ENCODE measurements at regions of chr14 and their contacts with region 1.

Region 1: GRCh38 chr14:90815822-90816700 is at the start of gene TTC7B:
- DNase-seq: peak; percentile 56 to 87 (median 83)
- ATAC-seq: peak; percentile 76 to 77
- H3K4me3 ChIP-seq: peak within 1 kb of the TSS; percentile 99
- H3K27ac ChIP-seq: no peak within 1 kb of the TSS
- H3K4me1 ChIP-seq: peaks cover 7% of the 10 kb centered on the region
- H3K27me3 ChIP-seq: no peaks in the 10 kb centered on the region
- total RNA-seq, gene TTC7B: 80.7 to 88.7 (median 85.5) TPM

Region 2: GRCh38 chr14:90758028-90758889 is 57.8 kb before region 1 on chr14:
- intact Hi-C with region 1: loop called in 1 of 4 experiments (anchors 10 kb)
- DNase-seq: peak; percentile 93 to 98 (median 97)
- ATAC-seq: peak; percentile 93
- H3K4me3 ChIP-seq: peak overlapping the region; percentile 52
- H3K27ac ChIP-seq: peak overlapping the region; percentile 97
- H3K4me1 ChIP-seq: peaks cover 4% of the 10 kb centered on the region
- H3K27me3 ChIP-seq: no peaks in the 10 kb centered on the region

Region 3: DNA sequence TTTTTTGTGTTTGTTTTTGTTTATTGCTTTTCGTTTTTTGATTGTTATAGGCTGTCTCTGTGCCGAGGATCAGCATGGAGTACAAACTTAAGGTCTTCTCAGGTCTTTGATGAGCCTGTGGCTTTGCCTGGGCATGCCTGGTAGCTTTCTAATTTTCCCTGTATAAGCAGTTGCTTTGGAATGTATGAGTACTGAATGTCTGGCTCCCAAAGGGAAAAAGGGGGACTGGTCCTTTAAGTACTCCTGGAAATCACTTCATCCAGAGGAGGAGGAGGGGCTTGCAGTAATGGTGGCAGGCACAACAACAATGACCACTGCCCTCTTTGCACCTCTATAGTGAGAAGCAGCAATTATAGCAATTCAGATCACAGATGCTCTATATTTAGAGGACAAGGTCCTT is 67.7 kb after region 1 on chr14:
- intact Hi-C with region 1: no loop called
- DNase-seq: no peak
- ATAC-seq: no peak
- H3K4me3 ChIP-seq: no peak overlapping the region
- H3K27ac ChIP-seq: no peak overlapping the region
- H3K4me1 ChIP-seq: no peaks in the 10 kb centered on the region
- H3K27me3 ChIP-seq: no peaks in the 10 kb centered on the region

Region 4: GRCh38 chr14:90995785-90996184 is 179.7 kb after region 1 on chr14:
- intact Hi-C with region 1: no loop called
- DNase-seq: no peak
- ATAC-seq: no peak
- H3K4me3 ChIP-seq: no peak overlapping the region
- H3K27ac ChIP-seq: no peak overlapping the region
- H3K4me1 ChIP-seq: no peaks in the 10 kb centered on the region
- H3K27me3 ChIP-seq: no peaks in the 10 kb centered on the region

Region 5: GRCh38 chr14:91127401-91127854 is 311.4 kb after region 1 on chr14:
- intact Hi-C with region 1: no loop called
- DNase-seq: peak; percentile 51 to 83 (median 80)
- ATAC-seq: peak; percentile 51 to 54
- H3K4me3 ChIP-seq: no peak overlapping the region
- H3K27ac ChIP-seq: peak overlapping the region; percentile 73
- H3K4me1 ChIP-seq: peaks cover 7% of the 10 kb centered on the region
- H3K27me3 ChIP-seq: no peaks in the 10 kb centered on the region

Measured in right cardiac atrium (tissue), 5 donors.